AG04449 (cell line): ENCODE measurements at regions of chr2 and their contacts with region 1.

Region 1: GRCh38 chr2:101036562-101037457 is 34.7 kb downstream of the RPL31 start:
- DNase-seq: no peak
- H3K4me3 ChIP-seq: no peak overlapping the region
- CTCF ChIP-seq: peak; percentile 49

Region 2: DNA sequence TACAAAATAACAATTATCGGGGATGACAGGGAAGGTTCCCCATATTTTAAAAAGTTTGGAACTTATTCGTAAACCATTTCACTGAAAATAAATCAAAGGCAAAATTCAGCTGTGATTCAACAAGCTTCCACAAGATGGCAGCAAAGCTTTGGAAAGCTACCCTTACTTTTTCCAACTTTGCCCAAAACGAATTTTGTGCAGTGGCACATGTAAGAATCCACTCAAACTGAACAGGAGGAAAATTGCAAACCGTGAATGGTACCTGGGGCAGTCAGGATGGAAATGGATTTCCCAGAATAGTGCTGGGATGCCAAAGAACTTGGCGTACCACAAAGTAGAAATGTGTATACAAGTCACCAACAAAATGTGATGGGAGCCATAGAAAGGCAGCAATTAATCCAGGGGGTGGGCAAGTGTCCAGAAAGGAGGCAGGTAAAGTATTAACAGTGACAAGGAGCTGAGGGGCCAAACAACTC is 24.1 kb before region 1 on chr2:
- CTCF ChIA-PET with region 1: interaction called, 13 read pairs
- POLR2A ChIA-PET with region 1: no interaction called
- DNase-seq: no peak
- H3K4me3 ChIP-seq: no peak overlapping the region
- CTCF ChIP-seq: peak; percentile 62

Region 3: DNA sequence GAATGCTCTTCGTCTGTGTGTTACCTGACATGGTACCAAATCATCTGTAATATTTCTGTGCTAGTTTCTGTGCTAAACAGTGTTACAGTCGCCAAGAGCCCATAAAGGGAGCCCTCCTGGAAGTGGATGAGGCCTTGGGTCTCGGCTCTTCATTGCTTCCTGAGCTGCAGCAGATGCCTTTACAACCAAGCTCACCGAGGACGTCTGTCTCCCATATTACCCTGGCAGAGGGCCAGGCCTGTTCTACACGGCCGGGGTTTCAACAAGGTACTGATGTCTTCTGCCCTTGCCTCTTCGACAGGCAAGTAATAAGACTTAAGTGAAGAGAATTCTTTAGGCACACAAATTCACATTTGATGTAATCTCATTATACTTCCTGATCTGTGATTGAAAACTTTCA is 17.9 kb before region 1 on chr2:
- CTCF ChIA-PET with region 1: interaction called, 13 read pairs
- POLR2A ChIA-PET with region 1: no interaction called
- DNase-seq: no peak
- H3K4me3 ChIP-seq: no peak overlapping the region
- CTCF ChIP-seq: no peak

Region 4: GRCh38 chr2:101047075-101047766 is 10.4 kb after region 1 on chr2:
- CTCF ChIA-PET with region 1: interaction called, 36 read pairs
- POLR2A ChIA-PET with region 1: no interaction called
- DNase-seq: no peak
- H3K4me3 ChIP-seq: no peak overlapping the region
- CTCF ChIP-seq: no peak

Region 5: DNA sequence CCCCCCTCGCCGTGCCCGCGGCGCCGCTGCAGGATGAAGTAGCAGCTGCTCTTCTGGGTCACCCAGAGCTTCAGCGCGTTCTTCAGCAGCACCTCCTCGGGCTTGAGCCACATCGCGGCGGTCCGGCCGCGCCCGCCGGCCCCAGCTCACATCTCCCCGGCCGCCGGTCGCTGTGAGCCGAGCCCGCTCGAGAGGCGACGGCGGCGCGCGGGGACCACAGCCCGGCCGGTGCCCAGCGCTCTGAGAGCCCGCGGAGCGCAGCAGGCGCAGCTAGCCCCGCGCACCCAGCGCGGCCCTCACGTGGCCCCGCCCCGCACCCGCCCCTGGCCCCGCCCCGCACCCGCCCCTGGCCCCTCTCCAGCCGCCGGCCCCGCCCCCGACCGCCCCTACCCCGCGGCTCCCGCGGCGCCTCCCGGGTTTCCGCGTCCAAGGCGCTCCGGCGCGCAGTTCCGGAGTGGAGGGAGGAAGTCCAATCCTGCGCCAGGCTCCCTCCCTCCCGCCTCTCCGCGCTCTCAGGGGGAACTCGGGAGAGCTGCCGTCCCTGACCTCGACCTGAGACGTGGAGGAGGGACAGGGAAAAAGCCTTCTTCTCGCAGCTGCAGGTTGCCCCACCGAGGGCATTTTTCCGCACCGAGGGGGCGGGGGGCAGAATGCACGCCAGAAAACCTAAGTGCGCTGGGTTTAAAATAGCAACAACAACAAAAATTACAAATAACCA is 114.5 kb after region 1 on chr2 and contains the start of gene TBC1D8:
- CTCF ChIA-PET with region 1: interaction called, 35 read pairs
- POLR2A ChIA-PET with region 1: no interaction called
- DNase-seq: no peak
- H3K4me3 ChIP-seq: peak within 1 kb of the TSS; percentile 64
- CTCF ChIP-seq: no peak

Region 6: DNA sequence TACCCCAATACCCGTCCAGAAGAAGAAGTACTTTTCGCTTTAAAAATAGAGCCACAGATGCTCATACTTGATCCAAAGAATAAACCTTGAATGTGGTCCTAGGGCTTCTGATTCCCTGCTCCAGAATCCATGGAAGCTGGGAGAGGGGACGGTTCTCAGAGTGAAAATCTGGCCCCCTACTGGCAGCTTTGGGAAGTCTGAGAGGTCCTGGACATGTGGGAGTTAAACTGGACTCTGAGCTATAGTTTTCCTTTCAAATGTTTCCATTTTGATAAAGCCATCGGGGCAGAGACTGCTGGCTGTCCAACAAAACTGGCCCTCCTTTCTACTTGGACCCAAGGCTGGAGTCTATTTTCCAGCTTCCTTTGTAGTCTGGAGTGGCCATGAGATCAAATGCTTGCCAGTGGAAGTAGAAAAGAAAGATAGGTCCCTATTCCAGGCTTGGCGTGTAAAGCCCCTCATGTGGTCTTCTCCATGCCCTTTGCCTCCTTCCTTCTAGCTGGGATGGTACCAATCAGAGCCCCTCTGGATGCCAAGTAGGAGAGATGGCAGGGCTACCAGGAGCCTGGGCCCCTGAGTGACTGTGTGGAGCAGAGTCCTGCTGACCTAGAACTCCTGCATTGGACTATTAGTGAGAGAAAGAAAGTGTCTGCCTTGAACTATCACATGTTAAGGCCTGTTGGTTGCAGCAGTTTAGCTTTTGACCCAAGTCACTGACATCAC is 152.0 kb after region 1 on chr2:
- CTCF ChIA-PET with region 1: interaction called, 63 read pairs
- POLR2A ChIA-PET with region 1: no interaction called
- DNase-seq: no peak
- H3K4me3 ChIP-seq: no peak overlapping the region
- CTCF ChIP-seq: peak; percentile 73

Region 7: GRCh38 chr2:101197215-101197745 is 160.5 kb after region 1 on chr2:
- CTCF ChIA-PET with region 1: interaction called, 132 read pairs
- POLR2A ChIA-PET with region 1: no interaction called
- DNase-seq: no peak
- H3K4me3 ChIP-seq: no peak overlapping the region
- CTCF ChIP-seq: no peak